Endothelial cell of umbilical vein (primary cell): ENCODE measurements at regions of chr1 and their contacts with region 1.

Region 1: DNA sequence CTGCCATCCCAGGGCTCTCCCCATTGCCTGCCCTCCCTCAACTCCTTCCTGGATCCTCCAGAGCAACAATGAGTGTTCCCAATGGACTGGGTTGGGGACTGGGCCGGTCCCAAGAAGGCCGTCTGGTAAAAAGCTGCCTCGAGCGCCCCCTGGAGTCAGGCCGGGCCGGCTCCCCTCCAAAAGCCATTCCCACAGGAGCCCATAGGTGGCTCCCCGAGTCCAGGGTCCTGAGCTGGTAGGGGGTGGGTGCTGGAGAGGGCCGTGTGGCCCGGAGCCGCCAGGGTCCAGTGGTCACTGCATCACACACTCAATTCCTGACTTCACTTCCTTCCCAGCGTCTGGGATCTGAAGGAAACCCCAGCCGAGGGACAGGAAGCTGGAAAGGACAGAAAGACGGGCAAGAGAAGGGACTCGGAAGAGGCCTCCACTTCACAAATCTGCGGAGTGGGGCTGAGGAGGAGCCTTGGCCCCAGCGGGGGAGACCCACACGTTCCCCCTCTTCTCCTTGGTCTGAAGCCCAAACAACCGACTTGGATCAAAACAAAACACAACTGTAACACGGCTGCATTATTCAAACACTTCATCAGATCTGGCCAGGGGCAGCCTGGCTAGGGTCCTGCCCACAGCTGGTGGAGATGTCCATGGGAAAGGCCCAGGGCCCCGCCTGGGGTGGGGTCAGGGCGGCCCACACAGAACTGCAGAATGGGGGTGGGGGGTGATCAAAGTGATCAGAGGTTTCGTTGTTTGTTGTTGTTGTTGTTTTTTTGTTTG is 10.9 kb upstream of the ALDH4A1 start:
- DNase-seq: peak; percentile 89
- H3K4me3 ChIP-seq: no peak overlapping the region
- H3K27ac ChIP-seq: peak overlapping the region; percentile 96
- H3K4me1 ChIP-seq: peaks cover 11% of the 10 kb centered on the region
- H3K27me3 ChIP-seq: no peaks in the 10 kb centered on the region
- CTCF ChIP-seq: peak; percentile 100
- POLR2A ChIP-seq: no peak

Region 2: DNA sequence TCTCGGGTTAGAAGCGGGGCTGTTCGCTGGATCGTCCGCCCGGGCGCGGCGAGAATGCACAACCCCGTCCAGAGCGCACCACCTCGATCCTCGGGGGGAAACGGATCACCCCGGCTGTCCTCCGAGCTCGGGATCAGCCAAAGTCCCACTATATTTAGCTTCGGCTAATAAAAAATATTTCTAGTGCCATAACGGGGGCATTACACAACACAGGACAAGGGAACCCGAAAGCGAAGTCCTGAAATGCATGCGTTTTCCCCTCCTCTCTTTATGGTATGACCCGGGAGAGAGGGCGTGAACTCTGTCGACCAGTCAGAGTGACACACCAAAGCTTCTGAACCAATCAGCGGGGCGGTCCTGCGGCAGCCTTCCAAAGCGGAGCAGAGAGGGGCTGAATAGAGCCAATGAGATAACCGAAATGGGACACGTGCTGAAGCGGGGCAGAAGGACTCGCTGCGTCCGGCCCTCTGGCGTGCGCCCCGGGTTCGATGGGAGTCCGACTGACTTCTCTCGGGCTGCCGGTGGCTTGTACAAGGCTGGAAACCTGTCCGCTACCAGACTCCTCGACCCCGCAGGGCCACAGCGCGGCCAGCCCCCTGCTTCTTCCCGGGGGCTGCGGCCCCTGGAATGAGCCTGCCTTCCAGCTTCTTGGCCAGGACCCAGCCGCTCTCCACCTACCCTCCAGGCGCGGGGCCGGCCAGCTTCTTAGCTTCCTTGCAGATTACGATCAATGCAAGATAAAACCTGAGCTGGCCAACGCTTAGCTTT is 10.5 kb before region 1 on chr1 and contains the start of gene ALDH4A1:
- CTCF ChIA-PET with region 1: interaction called, 38 read pairs
- POLR2A ChIA-PET with region 1: no interaction called
- dilution Hi-C with region 1: no loop called
- intact Hi-C with region 1: no loop called
- DNase-seq: peak; percentile 98
- H3K4me3 ChIP-seq: peak within 1 kb of the TSS; percentile 82 to 90 (median 83)
- H3K27ac ChIP-seq: peak within 1 kb of the TSS; percentile 88
- H3K4me1 ChIP-seq: peaks cover 22% of the 10 kb centered on the region
- H3K27me3 ChIP-seq: no peaks in the 10 kb centered on the region
- CTCF ChIP-seq: peak in 1 of 2 donors; percentile 0
- POLR2A ChIP-seq: peak; percentile 49
- total RNA-seq, gene ALDH4A1: 17.4 and 18.6 TPM in 2 replicates

Region 3: GRCh38 chr1:18949686-18950400 is 36.6 kb after region 1 on chr1:
- CTCF ChIA-PET with region 1: interaction called, 113 read pairs
- POLR2A ChIA-PET with region 1: interaction called, 7 read pairs
- dilution Hi-C with region 1: no loop called
- intact Hi-C with region 1: loop called (anchors 1 kb)
- DNase-seq: peak; percentile 73
- H3K4me3 ChIP-seq: peak overlapping the region in 1 of 3 experiments; percentile 4
- H3K27ac ChIP-seq: peak overlapping the region; percentile 78
- H3K4me1 ChIP-seq: peaks cover 53% of the 10 kb centered on the region
- H3K27me3 ChIP-seq: no peaks in the 10 kb centered on the region
- CTCF ChIP-seq: peak in 1 of 2 donors; percentile 23
- POLR2A ChIP-seq: no peak

Region 4: GRCh38 chr1:18972531-18972930 is 59.3 kb after region 1 on chr1:
- CTCF ChIA-PET with region 1: interaction called, 137 read pairs
- POLR2A ChIA-PET with region 1: interaction called, 7 read pairs
- dilution Hi-C with region 1: no loop called
- intact Hi-C with region 1: loop called (anchors 1 kb)
- DNase-seq: peak; percentile 60
- H3K4me3 ChIP-seq: no peak overlapping the region
- H3K27ac ChIP-seq: peak overlapping the region; percentile 19
- H3K4me1 ChIP-seq: peaks cover 15% of the 10 kb centered on the region
- H3K27me3 ChIP-seq: no peaks in the 10 kb centered on the region
- CTCF ChIP-seq: peak in 1 of 2 donors; percentile 21
- POLR2A ChIP-seq: no peak

Region 5: DNA sequence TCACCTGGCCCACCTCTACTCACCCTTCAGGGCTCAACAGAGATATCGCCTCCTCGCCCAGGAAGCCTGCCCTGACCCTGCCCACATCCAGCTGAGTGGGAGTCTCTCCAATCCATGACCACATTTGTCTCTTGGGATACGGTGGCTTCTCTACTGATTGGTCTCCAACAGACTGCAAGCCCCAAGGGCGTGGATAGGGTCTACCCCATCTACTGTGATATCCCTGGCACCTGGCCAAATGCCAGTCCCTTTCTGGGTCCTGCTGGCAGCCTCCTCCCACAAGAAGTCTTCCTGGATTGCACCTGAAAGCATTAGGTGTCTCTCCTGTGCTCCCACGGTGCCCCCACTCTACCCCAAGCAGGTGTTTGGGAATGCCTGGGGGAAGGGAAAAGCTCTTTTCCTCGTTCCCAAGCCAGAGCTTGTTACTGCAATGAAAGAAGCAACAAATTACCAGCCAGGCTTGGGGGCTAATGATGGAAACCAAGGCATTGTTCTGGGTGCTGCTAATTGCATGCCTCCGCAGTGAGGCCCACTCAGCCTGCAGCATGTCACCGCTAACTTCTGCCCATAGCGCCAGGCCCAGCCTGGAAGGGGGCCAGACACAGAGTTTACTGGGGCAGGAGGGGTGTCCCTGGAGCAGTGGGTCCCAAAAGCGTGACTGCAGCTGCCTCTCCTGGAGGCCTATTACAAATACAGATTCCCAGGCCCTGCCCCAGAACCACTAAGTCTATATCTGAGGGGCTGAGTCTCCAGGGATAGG is 133.9 kb after region 1 on chr1:
- CTCF ChIA-PET with region 1: interaction called, 13 read pairs
- POLR2A ChIA-PET with region 1: no interaction called
- dilution Hi-C with region 1: no loop called
- intact Hi-C with region 1: no loop called
- DNase-seq: no peak
- H3K4me3 ChIP-seq: no peak overlapping the region
- H3K27ac ChIP-seq: no peak overlapping the region
- H3K4me1 ChIP-seq: no peaks in the 10 kb centered on the region
- H3K27me3 ChIP-seq: peaks cover 0 to 6% of the 10 kb centered on the region in 2 experiments
- CTCF ChIP-seq: no peak
- POLR2A ChIP-seq: no peak

Region 6: DNA sequence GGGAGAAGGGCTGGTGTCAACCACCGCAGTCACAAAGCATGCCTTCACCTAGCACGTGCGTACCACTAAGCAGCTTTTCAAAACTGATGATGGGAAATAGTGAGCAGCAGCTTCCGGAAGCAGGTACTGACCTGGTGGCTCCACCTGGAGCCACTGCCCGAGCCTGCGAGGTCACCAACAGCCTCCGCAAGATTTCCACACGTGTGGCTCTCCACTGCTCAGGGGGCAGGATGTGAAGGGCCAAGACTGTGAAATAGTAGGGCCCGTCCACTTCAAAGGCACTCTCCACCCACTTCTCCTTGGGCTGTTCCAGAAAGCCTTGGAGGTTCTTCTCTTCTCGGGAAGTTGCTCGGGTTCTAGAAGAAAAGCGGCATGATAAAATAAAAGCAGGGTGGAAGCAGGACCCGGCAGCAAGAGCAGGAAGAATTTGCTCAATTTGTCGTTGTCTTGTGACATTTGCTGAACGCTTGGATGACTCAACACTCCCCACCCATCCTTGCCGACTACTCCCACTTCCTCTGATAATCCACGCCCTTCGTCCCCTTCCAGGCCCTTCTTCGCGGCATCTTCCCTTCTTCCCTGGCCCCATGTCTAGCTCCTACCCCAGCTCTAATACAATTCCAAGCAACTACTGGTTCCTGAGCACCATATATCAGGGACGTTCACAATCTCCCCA is 168.1 kb after region 1 on chr1:
- CTCF ChIA-PET with region 1: interaction called, 59 read pairs
- POLR2A ChIA-PET with region 1: interaction called, 4 read pairs
- dilution Hi-C with region 1: no loop called
- intact Hi-C with region 1: loop called (anchors 1 kb)
- DNase-seq: peak; percentile 52
- H3K4me3 ChIP-seq: no peak overlapping the region
- H3K27ac ChIP-seq: peak overlapping the region; percentile 84
- H3K4me1 ChIP-seq: peaks cover 42% of the 10 kb centered on the region
- H3K27me3 ChIP-seq: no peaks in the 10 kb centered on the region
- CTCF ChIP-seq: no peak
- POLR2A ChIP-seq: no peak

Region 7: GRCh38 chr1:19113697-19114092 is 200.4 kb after region 1 on chr1:
- CTCF ChIA-PET with region 1: interaction called, 23 read pairs
- POLR2A ChIA-PET with region 1: no interaction called
- dilution Hi-C with region 1: no loop called
- intact Hi-C with region 1: no loop called
- DNase-seq: peak; percentile 34
- H3K4me3 ChIP-seq: no peak overlapping the region
- H3K27ac ChIP-seq: no peak overlapping the region
- H3K4me1 ChIP-seq: no peaks in the 10 kb centered on the region
- H3K27me3 ChIP-seq: no peaks in the 10 kb centered on the region
- CTCF ChIP-seq: peak; percentile 42 to 60
- POLR2A ChIP-seq: no peak

Region 8: GRCh38 chr1:19398309-19398760 is 485.1 kb after region 1 on chr1:
- CTCF ChIA-PET with region 1: no interaction called
- POLR2A ChIA-PET with region 1: no interaction called
- dilution Hi-C with region 1: no loop called
- intact Hi-C with region 1: no loop called
- DNase-seq: no peak
- H3K4me3 ChIP-seq: no peak overlapping the region
- H3K27ac ChIP-seq: no peak overlapping the region
- H3K4me1 ChIP-seq: no peaks in the 10 kb centered on the region
- H3K27me3 ChIP-seq: no peaks in the 10 kb centered on the region
- CTCF ChIP-seq: no peak
- POLR2A ChIP-seq: no peak

Region 9: GRCh38 chr1:19430121-19431068 is 517.1 kb after region 1 on chr1:
- CTCF ChIA-PET with region 1: no interaction called
- POLR2A ChIA-PET with region 1: no interaction called
- dilution Hi-C with region 1: no loop called
- intact Hi-C with region 1: no loop called
- DNase-seq: peak; percentile 85
- H3K4me3 ChIP-seq: no peak overlapping the region
- H3K27ac ChIP-seq: peak overlapping the region; percentile 19
- H3K4me1 ChIP-seq: peaks cover 19% of the 10 kb centered on the region
- H3K27me3 ChIP-seq: no peaks in the 10 kb centered on the region
- CTCF ChIP-seq: no peak
- POLR2A ChIP-seq: no peak